ENCODE measurements at regions of chr10 and their contacts with region 1.

Region 1: DNA sequence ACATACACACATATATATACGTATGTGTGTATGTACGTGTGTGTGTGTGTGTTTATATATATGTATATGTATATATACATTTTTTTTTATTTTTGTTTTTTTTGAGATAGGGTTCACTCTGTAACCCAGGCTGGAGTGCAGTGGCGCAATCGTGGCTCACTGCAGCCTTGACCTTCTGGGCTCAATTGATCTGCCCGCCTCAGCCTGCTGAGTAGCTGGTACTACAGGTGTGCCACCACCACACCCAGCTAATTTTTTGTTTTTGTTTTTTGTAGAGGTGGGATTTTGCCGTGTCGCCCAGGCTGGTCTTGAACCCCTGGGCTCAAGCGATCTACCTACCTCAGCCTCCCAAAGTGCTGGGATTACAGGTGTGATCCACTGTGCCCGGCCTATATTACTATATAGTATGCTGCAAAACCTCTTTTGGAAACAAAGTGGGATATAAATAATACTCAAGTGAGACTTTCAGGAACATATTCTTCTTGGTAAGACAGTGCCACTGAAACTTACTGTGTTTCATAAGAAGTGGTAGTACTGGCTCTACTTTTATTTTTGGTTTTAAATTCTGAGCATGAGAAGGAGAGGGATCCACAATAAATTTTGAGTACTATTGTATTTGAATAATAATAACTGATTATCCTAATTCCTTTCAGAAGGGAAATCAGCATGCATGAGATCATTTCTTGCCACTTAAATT is 51.0 kb downstream of the MLLT10 start:
- DNase-seq: no peak
- H3K4me3 Mint-ChIP-seq: no peak overlapping the region
- H3K27ac Mint-ChIP-seq: no peak overlapping the region
- H3K4me1 Mint-ChIP-seq: peaks cover 42% of the 10 kb centered on the region
- H3K27me3 Mint-ChIP-seq: no peaks in the 10 kb centered on the region

Region 2: DNA sequence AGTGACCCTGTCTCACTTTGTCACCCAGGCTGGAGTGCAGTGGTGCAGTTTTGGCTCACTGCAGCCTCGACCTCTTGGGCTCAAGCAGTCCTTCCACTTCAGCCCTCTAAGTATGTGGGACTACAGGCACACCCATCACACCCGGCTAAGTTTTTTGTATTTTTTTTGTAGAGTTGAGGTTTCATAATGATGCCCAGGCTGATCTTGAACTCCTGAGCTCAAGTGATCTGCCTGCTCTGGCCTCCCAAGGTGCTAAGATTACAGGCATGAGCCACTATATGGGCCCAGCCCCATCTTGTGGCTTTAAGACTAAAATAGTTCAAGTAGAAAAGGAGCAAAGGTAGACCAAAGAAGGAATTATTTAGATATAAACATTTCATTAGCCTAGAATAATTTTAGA is 14.6 kb after region 1 on chr10:
- CTCF ChIA-PET with region 1: no interaction called
- intact Hi-C with region 1: no loop called
- DNase-seq: no peak
- H3K4me3 Mint-ChIP-seq: no peak overlapping the region
- H3K27ac Mint-ChIP-seq: no peak overlapping the region
- H3K4me1 Mint-ChIP-seq: peaks cover 22% of the 10 kb centered on the region
- H3K27me3 Mint-ChIP-seq: no peaks in the 10 kb centered on the region

Region 3: DNA sequence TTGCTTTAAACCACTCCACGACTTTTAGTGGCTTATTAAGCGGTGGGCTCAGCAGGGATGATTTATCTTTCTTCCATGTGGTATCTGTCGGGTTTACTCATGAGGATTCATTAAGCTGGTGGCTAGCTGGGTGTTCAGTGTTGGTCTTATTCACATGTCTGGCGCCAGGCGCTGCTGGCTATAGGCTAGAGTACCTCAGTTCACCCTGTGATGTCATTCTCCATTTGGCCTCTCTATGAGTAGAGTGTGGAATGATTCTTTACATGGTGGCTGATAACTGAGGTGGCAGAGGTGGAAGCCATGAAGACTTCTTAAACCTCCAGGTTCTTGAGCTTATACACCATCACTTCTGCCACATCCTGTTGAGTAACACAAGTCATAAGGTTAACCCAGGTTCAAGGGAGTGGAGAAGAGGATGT is 64.5 kb after region 1 on chr10:
- CTCF ChIA-PET with region 1: no interaction called
- intact Hi-C with region 1: loop called (anchors 2 kb)
- DNase-seq: peak; percentile 15
- H3K4me3 Mint-ChIP-seq: no peak overlapping the region
- H3K27ac Mint-ChIP-seq: no peak overlapping the region
- H3K4me1 Mint-ChIP-seq: peaks cover 25% of the 10 kb centered on the region
- H3K27me3 Mint-ChIP-seq: no peaks in the 10 kb centered on the region

Region 4: DNA sequence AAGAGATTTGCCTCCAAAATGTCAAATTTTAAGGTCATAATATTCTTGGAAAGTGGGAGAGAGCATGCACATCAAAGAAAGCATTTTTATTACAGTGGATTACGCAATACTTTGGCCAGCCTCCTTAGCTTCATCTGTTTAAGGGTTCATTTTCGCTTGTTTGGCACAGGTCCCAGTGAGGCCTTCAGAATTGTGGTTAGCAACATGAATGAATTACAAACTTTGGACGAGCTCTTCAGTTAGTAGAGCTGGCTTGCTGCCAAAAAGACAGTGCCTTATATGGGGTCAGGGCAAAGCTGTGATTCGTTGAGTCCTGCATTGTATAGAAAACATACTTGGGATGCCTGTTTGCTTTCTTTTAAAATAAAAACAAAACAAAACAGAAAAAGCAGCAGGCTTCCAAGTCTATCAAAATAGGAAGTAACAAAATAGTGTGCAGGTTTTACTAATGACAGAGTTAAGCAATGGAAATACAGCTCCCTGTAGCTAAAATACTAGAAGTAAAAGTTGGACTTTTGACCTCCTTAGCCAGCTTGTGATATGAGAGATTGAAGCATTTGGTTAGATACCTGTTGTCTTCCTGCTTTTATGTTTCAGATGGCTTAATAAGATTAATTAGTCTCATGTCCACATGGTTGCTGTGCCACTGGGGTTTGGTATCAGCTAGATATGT is 139.8 kb after region 1 on chr10:
- CTCF ChIA-PET with region 1: no interaction called
- intact Hi-C with region 1: loop called (anchors 5 kb)
- DNase-seq: peak; percentile 72
- H3K4me3 Mint-ChIP-seq: no peak overlapping the region
- H3K27ac Mint-ChIP-seq: no peak overlapping the region
- H3K4me1 Mint-ChIP-seq: peaks cover 27% of the 10 kb centered on the region
- H3K27me3 Mint-ChIP-seq: no peaks in the 10 kb centered on the region